A549 (cell line): ENCODE measurements at regions of chr1 and their contacts with region 1.

Region 1: DNA sequence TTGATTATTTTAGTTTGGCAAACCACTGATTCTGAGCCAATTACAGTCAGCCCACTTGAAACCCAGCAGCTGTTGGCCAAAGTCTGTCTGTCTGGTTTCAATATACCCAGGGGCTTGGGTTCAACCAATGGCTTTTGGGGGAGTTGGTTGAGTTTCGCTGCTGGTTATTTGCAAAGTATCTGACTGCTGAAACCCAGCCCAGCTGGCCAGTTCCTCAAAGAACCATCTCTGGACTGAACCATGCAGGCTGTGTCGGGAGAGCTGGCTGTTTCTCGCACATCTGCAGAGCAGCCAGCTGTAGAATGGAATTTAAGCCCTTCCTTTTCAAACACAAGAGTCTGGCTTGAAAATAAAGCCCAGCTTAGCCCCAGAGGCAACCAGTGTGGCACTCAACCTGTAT is 66.0 kb upstream of the PAX7 start:
- DNase-seq: no peak
- ATAC-seq: no peak
- H3K4me3 ChIP-seq: no peak overlapping the region
- H3K27ac ChIP-seq: no peak overlapping the region
- H3K4me1 ChIP-seq: no peaks in the 10 kb centered on the region
- CTCF ChIP-seq: no peak
- EP300 ChIP-seq: no peak
- POLR2A ChIP-seq: no peak
- RAD21 ChIP-seq: no peak

Region 2: DNA sequence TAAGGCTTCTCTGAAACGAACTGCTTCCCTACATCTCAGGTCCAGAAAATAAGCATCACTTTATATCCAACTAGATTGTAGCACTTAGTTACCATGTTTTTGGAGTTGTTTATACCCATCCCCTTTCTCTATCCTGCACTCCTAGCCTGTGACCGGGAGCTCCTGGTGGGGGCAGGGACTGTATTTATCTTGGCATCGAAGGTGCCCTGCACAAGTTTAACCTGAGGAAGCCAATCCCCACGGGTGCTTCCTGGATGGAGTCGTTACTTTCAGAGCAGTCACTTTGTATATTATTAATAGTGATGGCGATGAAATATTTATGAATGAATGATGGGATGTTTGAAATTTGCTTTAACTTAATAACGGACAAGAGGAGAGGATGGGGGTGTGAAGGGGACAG is 10.1 kb before region 1 on chr1:
- CTCF ChIA-PET with region 1: interaction called, 11 read pairs
- POLR2A ChIA-PET with region 1: no interaction called
- DNase-seq: no peak
- ATAC-seq: no peak
- H3K4me3 ChIP-seq: no peak overlapping the region
- H3K27ac ChIP-seq: no peak overlapping the region
- H3K4me1 ChIP-seq: peaks cover 4% of the 10 kb centered on the region; the same call in 1 of the 3 replicates
- CTCF ChIP-seq: no peak
- EP300 ChIP-seq: no peak
- POLR2A ChIP-seq: no peak
- RAD21 ChIP-seq: no peak